CD4-positive, alpha-beta memory T cell (primary cell): ENCODE measurements at regions of chr9 and their contacts with region 1.

Region 1: DNA sequence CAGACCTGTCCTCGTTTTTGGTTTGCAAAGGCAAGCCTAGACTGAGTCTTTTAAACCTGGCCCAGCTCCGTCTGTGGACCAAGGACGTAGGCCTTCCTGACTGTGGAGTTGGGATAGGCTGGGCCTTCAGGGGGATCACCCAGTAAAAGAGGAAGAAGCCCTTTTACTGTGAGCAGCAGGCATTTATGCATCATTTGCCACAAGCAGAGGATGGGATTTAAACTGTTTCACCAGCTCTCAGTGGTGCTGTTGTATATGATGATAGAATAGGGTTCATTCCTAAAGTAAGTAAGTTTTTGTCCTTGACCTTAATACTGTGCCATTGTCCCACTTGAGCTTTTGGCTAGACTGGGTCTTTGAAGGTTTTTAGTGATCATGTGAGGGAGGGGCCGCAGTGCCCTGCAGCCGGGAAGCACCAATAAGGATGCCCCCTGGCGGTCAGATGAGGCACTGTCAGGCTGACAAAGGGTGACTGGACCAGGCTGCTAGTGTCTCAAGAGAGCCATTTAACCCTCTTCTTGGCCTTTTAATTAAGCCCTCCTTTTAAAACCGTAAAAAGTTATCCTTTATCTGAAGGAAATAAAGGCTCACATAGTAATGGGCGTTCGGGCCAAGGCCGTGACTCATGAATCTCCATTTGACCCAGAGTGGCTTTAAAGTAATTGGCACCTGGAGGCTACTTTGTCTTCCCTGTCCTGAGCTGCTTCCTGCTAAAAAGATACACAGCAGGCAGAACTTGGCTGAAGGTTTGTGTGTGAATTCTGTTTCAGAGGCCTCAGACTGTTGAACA is 74.0 kb downstream of the UBAP1 start:
- DNase-seq: peak; percentile 36 to 65 (median 62)
- H3K4me3 ChIP-seq: no peak overlapping the region
- H3K4me3 Mint-ChIP-seq: no peak overlapping the region
- H3K27ac ChIP-seq: no peak overlapping the region
- H3K27ac Mint-ChIP-seq: peak overlapping the region; percentile 9 to 78 (median 74)
- H3K4me1 ChIP-seq: peaks cover 13% of the 10 kb centered on the region
- H3K4me1 Mint-ChIP-seq: peaks cover 4 to 20% (median 11%) of the 10 kb centered on the region in 4 donors
- H3K27me3 ChIP-seq: no peaks in the 10 kb centered on the region
- H3K27me3 Mint-ChIP-seq: no peaks in the 10 kb centered on the region

Region 2: DNA sequence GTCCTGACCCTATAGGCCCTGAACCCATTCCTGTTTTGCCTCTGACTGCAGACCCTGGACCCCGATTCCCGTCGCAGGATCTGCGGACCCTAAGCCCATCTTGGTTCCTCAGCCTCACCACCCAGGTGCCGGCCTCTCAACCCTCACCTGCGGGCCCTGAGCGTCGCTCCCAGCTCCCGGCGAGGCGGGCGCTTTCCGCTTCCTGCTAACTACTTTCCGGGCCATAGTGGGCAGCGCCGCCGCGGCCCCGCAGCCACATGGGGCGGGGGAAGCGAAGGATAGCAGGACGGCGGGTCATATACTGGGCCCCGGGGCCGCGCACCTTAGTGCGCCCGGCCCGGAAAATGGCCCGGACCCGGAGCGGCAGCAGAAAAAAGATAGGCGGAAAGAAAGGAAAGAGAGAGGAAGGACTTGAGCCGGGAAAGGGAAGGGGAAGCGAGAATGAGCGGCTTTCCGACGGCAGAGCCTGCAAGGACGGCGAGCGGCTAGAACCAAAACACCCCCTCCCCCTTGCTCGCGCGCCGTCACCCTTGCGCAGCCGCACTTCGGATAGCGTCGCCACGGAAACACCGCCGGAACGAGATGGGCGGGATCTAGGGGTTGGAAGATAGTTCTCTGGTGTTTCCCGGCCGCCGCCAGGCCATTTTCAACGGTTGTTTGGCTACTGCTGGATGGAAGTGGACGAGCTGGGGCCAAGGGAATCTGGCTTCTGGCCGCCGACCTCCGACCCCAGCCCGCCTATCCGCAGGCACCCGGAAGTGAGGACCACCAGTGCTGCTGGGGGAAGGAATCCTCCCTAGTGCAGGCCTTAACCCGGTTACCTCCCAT is 126.4 kb before region 1 on chr9 and contains the start of gene DCAF12:
- CTCF ChIA-PET with region 1: interaction called, 9 read pairs
- POLR2A ChIA-PET with region 1: interaction called, 3 read pairs
- intact Hi-C with region 1: loop called (anchors 1 kb)
- DNase-seq: peak; percentile 90 to 92 (median 91)
- H3K4me3 ChIP-seq: peak within 1 kb of the TSS; percentile 88 to 92
- H3K4me3 Mint-ChIP-seq: peak within 1 kb of the TSS; percentile 96 to 100 (median 98)
- H3K27ac ChIP-seq: peak within 1 kb of the TSS; percentile 83
- H3K27ac Mint-ChIP-seq: peak within 1 kb of the TSS; percentile 95 to 99 (median 99)
- H3K4me1 ChIP-seq: peaks cover 45% of the 10 kb centered on the region
- H3K4me1 Mint-ChIP-seq: peaks cover 39 to 58% (median 45%) of the 10 kb centered on the region in 4 donors
- H3K27me3 ChIP-seq: no peaks in the 10 kb centered on the region
- H3K27me3 Mint-ChIP-seq: no peaks in the 10 kb centered on the region
- total RNA-seq, gene DCAF12: 29.7 to 31.0 TPM

Region 3: GRCh38 chr9:34190996-34191892 is 61.6 kb before region 1 on chr9:
- CTCF ChIA-PET with region 1: interaction called, 14 read pairs
- POLR2A ChIA-PET with region 1: interaction called, 5 read pairs
- intact Hi-C with region 1: no loop called
- DNase-seq: no peak
- H3K4me3 ChIP-seq: no peak overlapping the region
- H3K4me3 Mint-ChIP-seq: peak overlapping the region in 3 of 8 donors; percentile 25 to 35 (median 27)
- H3K27ac ChIP-seq: no peak overlapping the region
- H3K27ac Mint-ChIP-seq: peak overlapping the region; percentile 46 to 87 (median 66)
- H3K4me1 ChIP-seq: peaks cover 56% of the 10 kb centered on the region
- H3K4me1 Mint-ChIP-seq: peaks cover 41 to 74% (median 61%) of the 10 kb centered on the region in 4 donors
- H3K27me3 ChIP-seq: no peaks in the 10 kb centered on the region
- H3K27me3 Mint-ChIP-seq: no peaks in the 10 kb centered on the region

Region 4: DNA sequence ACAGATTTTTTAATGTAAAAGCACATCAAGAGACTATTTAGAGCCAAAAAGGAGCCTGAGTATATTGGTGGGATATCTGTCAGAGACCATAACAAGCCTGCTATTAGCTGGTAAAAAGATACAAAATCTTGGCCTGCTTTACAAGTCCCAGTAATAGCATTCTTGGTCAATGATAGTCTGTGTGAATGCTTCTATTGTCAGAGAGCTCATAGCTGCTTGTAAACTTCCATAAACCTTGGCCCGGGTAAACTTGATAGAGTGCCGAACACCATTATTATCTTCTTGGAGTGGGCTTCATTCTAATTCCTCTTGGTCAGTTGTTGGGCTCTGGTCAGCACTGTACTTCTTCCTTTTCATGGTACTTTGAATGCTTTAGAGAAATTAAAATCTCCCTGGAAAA is 10.0 kb before region 1 on chr9:
- CTCF ChIA-PET with region 1: interaction called, 47 read pairs
- POLR2A ChIA-PET with region 1: interaction called, 3 read pairs
- intact Hi-C with region 1: no loop called
- DNase-seq: no peak
- H3K4me3 ChIP-seq: no peak overlapping the region
- H3K4me3 Mint-ChIP-seq: peak overlapping the region in 1 of 8 donors; percentile 20
- H3K27ac ChIP-seq: no peak overlapping the region
- H3K27ac Mint-ChIP-seq: peak overlapping the region in 1 of 7 donors; percentile 8
- H3K4me1 ChIP-seq: peaks cover 12% of the 10 kb centered on the region
- H3K4me1 Mint-ChIP-seq: peaks cover 21 to 51% (median 36%) of the 10 kb centered on the region in 4 donors
- H3K27me3 ChIP-seq: no peaks in the 10 kb centered on the region
- H3K27me3 Mint-ChIP-seq: no peaks in the 10 kb centered on the region

Region 5: DNA sequence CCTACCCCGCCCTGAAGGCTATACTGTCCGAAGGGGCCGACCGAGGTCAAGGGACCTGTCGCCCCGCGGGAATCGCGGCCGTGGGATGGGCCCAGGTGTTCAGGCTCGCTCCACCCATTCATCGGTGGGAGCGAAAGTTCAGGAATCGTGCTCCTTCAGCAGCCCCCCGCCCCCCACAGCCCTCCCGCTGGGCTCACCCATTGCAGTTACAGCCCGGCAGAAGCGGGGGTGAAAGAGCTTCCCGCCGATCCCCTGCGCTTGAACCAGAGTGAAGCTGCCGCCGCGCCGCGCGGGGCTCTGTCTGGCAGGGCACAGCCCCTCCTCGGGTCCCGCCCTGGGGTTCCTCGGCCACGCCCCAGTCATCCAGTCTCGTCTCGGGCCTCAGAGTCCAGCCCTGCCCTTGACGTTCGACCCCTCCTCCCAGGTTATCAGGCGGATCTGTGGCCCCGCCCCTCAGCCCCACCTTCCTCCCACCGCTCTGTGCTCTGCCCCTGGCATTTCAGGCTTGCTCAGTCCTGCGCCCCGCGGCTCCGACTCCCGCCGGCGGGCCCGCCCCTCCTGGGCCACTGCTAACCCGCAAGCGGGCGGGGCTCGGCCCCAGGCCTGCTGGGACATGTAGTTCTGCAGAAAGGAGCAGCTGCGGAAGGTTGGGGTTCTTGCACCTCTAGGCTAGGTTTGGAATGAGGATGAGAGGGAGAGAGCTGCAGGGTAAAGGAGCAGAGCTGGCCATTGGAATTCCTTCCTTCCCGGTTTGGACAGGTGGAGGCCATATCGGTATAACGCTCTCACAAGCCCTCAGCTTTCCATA is 123.9 kb after region 1 on chr9 and contains the start of gene MYORG:
- CTCF ChIA-PET with region 1: interaction called, 54 read pairs
- POLR2A ChIA-PET with region 1: no interaction called
- intact Hi-C with region 1: loop called (anchors 1 kb)
- DNase-seq: peak; percentile 94 to 98 (median 96)
- H3K4me3 ChIP-seq: peak within 1 kb of the TSS; percentile 70 to 77
- H3K4me3 Mint-ChIP-seq: peak within 1 kb of the TSS; percentile 92 to 98 (median 94)
- H3K27ac ChIP-seq: peak within 1 kb of the TSS; percentile 49
- H3K27ac Mint-ChIP-seq: peak within 1 kb of the TSS; percentile 58 to 97 (median 93)
- H3K4me1 ChIP-seq: peaks cover 39% of the 10 kb centered on the region
- H3K4me1 Mint-ChIP-seq: peaks cover 33 to 54% (median 44%) of the 10 kb centered on the region in 4 donors
- H3K27me3 ChIP-seq: no peaks in the 10 kb centered on the region
- H3K27me3 Mint-ChIP-seq: no peaks in the 10 kb centered on the region
- total RNA-seq, gene MYORG: 1.3 to 1.4 TPM